Dendritic cell treated with granulocyte-macrophage colony-stimulating factor and Interleukin-4, amounts not matched to agents 40 ng/mL and 50 ng/mL, for 4 days (primary cell): ENCODE measurements at regions of chr3 and their contacts with region 1.

Region 1: GRCh38 chr3:152309535-152310307 is 41.0 kb downstream of the MBNL1 start:
- H3K4me3 Mint-ChIP-seq: no peak overlapping the region
- H3K27ac Mint-ChIP-seq: no peak overlapping the region
- H3K4me1 Mint-ChIP-seq: peaks cover 25% of the 10 kb centered on the region
- H3K27me3 Mint-ChIP-seq: no peaks in the 10 kb centered on the region

Region 2: GRCh38 chr3:152071924-152072323 is 237.8 kb before region 1 on chr3:
- intact Hi-C with region 1: loop called (anchors 10 kb)
- H3K4me3 Mint-ChIP-seq: no peak overlapping the region
- H3K27ac Mint-ChIP-seq: no peak overlapping the region
- H3K4me1 Mint-ChIP-seq: no peaks in the 10 kb centered on the region
- H3K27me3 Mint-ChIP-seq: no peaks in the 10 kb centered on the region

Region 3: DNA sequence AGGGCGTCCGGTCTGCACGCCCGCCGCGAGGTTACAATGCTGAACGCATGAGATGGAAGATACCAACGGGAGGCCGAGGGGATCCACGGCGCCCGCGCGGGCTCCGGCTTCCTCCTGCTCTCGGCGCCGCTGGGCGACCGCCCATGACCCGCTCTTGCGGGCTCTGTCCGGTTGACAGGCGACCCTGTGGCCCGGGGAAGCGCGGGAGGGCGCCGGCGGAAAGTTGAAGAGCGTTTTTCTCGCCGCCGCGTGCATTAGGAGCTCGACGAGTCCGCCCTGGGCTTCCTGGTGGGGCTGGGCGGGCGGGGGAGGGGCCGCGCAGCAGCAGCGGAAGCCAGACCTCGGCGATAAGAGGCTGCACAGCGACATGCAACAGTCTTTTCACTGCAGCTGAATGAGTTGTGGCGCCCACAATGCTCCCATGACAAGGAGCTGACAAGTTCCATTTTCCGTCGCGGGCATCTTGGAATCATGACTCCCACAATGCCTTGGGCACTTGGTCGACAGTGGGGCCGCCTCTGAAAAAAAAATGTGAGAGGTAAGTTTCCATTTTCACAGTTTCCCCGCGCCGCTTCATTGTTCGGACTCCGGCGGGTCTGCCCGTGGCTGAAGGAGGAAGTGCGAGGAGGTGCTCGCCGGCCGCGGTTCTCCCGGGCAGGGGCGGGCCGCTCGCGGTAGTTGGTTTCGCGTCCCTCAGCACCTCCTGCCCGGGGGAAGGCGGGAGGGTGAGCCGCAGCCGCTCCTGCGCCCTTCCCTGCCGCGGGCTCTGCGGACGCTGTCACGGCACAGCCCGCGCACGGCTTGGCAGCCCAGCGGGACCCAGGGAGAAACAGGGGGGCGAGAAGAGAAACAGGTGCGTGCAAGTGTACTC is 40.9 kb before region 1 on chr3 and contains the start of gene MBNL1:
- intact Hi-C with region 1: no loop called
- H3K4me3 Mint-ChIP-seq: peak within 1 kb of the TSS; percentile 96
- H3K27ac Mint-ChIP-seq: peak within 1 kb of the TSS; percentile 97
- H3K4me1 Mint-ChIP-seq: peaks cover 51% of the 10 kb centered on the region
- H3K27me3 Mint-ChIP-seq: no peaks in the 10 kb centered on the region